ENCODE measurements at regions of chr2 and their contacts with region 1.

Region 1: DNA sequence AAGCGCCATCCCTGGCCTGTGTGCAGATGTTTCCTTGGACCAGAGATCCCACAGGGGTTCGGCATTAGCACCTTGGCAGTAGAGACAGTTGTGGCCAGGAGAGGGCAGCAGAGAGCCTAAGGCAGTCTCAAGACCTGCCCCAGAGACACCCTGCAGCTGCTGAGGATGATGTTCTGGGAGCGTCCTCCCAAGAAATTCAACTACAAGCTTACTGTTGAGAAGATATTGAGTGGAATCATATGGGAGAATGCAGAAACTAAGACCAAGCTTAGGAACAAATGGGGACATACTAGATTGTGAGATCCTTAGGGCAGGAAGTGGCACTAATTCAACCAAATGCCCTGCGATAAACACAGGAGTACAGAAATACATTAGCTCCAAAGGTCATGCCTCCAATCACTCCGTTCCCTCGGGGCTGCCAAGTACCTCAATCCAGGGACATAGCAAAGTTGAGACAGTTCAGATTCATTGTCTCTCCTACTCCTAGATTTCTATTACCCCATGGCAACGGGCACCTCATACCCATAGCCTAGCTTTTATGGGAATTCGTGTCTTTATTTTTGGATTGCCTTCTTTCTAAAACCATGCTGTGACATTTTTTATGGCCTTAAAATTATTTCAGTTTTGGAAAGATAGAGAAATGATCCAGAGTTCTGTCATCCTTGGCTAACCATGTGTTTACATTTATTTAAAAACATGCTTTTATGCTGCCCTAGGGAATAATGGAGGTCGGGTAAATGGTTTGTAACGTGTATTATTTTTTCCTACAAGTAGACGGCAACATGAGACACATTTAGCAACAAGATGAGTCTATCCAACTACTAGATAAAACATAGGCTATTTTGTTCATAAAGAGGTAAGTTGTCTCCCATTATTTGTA is 2.2 kb upstream of the ERMN start:
- DNase-seq: peak; percentile 71
- ATAC-seq: peak; percentile 98
- H3K4me3 Mint-ChIP-seq: peak overlapping the region; percentile 66
- H3K27ac Mint-ChIP-seq: no peak overlapping the region
- H3K4me1 Mint-ChIP-seq: peaks cover 14% of the 10 kb centered on the region
- H3K27me3 Mint-ChIP-seq: no peaks in the 10 kb centered on the region
- CTCF ChIP-seq: peak; percentile 83

Region 2: DNA sequence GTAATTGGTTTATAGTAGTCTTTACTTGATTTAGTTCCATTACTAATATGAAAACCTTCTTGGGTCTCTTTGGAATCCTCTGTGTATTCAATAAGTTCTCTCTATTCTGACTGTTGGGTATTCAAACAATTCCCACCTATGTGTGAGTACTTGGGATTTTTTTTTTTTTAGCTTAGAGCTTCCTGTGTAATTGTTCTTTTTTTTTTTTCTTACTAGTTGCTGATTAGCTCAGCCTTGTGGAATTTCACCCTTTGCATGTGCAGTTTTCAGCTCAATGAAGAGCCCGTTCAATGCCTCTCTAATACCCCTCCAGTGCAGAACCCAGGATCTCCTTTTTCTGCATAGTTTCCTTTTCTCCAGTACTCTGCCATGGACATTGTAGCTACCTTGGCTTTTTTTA is 409.5 kb before region 1 on chr2:
- CTCF ChIA-PET with region 1: no interaction called
- POLR2A ChIA-PET with region 1: no interaction called
- intact Hi-C with region 1: no loop called
- DNase-seq: no peak
- ATAC-seq: no peak
- H3K4me3 Mint-ChIP-seq: no peak overlapping the region
- H3K27ac Mint-ChIP-seq: no peak overlapping the region
- H3K4me1 Mint-ChIP-seq: no peaks in the 10 kb centered on the region
- H3K27me3 Mint-ChIP-seq: no peaks in the 10 kb centered on the region
- CTCF ChIP-seq: no peak

Region 3: DNA sequence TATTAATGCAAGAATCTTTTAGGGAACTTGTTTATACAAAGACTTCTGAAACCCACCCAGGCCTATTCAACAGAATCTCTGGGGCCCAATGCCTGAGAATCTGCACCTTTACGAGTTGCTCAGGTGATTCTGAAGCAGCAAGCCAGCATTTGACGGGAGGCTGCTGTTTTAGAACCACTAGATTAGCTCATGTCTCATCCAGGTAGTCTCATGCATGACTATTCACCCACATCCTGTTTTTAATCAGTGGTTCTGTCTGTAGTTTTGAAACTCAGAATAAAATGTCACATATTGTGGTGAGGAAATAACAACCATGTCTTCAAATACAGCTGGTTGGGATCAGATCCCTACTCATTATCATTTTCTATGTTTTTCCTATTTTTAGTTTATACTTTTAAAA is 76.5 kb after region 1 on chr2:
- CTCF ChIA-PET with region 1: interaction called, 20 read pairs
- POLR2A ChIA-PET with region 1: interaction called, 18 read pairs
- intact Hi-C with region 1: loop called (anchors 1 kb)
- DNase-seq: no peak
- ATAC-seq: peak; percentile 96
- H3K4me3 Mint-ChIP-seq: peak overlapping the region; percentile 50
- H3K27ac Mint-ChIP-seq: peak overlapping the region; percentile 88
- H3K4me1 Mint-ChIP-seq: peaks cover 62% of the 10 kb centered on the region
- H3K27me3 Mint-ChIP-seq: no peaks in the 10 kb centered on the region
- CTCF ChIP-seq: no peak

Region 4: GRCh38 chr2:157427003-157427921 is 99.4 kb after region 1 on chr2:
- CTCF ChIA-PET with region 1: interaction called, 12 read pairs
- POLR2A ChIA-PET with region 1: interaction called, 4 read pairs
- intact Hi-C with region 1: no loop called
- DNase-seq: no peak
- ATAC-seq: peak; percentile 37
- H3K4me3 Mint-ChIP-seq: no peak overlapping the region
- H3K27ac Mint-ChIP-seq: peak overlapping the region; percentile 71
- H3K4me1 Mint-ChIP-seq: peaks cover 51% of the 10 kb centered on the region
- H3K27me3 Mint-ChIP-seq: no peaks in the 10 kb centered on the region
- CTCF ChIP-seq: no peak

Region 5: GRCh38 chr2:157460384-157460837 is 132.6 kb after region 1 on chr2:
- CTCF ChIA-PET with region 1: interaction called, 10 read pairs
- POLR2A ChIA-PET with region 1: no interaction called
- intact Hi-C with region 1: no loop called
- DNase-seq: no peak
- ATAC-seq: no peak
- H3K4me3 Mint-ChIP-seq: no peak overlapping the region
- H3K27ac Mint-ChIP-seq: no peak overlapping the region
- H3K4me1 Mint-ChIP-seq: peaks cover 15% of the 10 kb centered on the region
- H3K27me3 Mint-ChIP-seq: no peaks in the 10 kb centered on the region
- CTCF ChIP-seq: no peak

Region 6: DNA sequence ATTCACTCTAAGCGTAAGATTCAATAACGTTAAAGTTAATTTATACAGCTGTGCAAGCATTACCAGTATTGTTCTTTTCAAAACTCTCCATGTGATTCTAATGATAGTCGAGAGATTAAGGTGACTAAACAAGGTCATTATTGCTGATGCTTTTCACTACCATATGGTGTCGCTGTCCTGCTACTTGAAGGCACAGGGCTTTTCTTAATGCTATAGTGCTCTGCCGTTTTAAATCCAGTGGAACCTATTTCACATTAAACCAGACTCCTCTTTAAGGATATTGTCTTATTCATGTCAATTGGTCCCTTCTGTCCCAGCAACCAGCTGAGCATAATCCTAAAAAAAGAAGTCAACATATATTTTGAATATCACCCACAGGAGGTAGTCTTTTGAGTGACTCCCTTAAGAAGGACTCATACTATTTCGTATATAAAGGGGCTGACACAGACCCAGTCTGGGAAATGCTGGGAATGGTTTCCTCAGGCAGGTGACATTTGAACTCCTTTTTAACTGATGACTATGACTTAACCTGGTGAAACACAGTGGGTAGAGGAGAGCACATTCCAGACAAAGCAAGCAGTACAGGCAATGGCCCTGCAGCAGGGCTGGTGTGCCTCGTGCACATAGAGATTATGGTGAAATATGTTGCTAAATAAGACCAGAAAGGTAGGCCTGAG is 169.9 kb after region 1 on chr2:
- CTCF ChIA-PET with region 1: interaction called, 114 read pairs
- POLR2A ChIA-PET with region 1: no interaction called
- intact Hi-C with region 1: loop called (anchors 1 kb)
- DNase-seq: no peak
- ATAC-seq: peak; percentile 78
- H3K4me3 Mint-ChIP-seq: no peak overlapping the region
- H3K27ac Mint-ChIP-seq: no peak overlapping the region
- H3K4me1 Mint-ChIP-seq: peaks cover 38% of the 10 kb centered on the region
- H3K27me3 Mint-ChIP-seq: no peaks in the 10 kb centered on the region
- CTCF ChIP-seq: peak; percentile 46

Region 7: GRCh38 chr2:157628477-157629415 is 300.9 kb after region 1 on chr2 and contains the start of gene ACVR1C:
- CTCF ChIA-PET with region 1: interaction called, 3 read pairs
- POLR2A ChIA-PET with region 1: no interaction called
- intact Hi-C with region 1: loop called (anchors 1 kb)
- DNase-seq: peak; percentile 55
- ATAC-seq: peak; percentile 87
- H3K4me3 Mint-ChIP-seq: peak within 1 kb of the TSS; percentile 82
- H3K27ac Mint-ChIP-seq: peak within 1 kb of the TSS; percentile 12
- H3K4me1 Mint-ChIP-seq: peaks cover 22% of the 10 kb centered on the region
- H3K27me3 Mint-ChIP-seq: peaks cover 12% of the 10 kb centered on the region
- CTCF ChIP-seq: no peak
- total RNA-seq, gene ACVR1C: 0.20 and 0.32 TPM in 2 replicates

Measured in activated B cell treated with CpG ODN at 0.5 μM for 24 hours (primary cell).